Panc1 (cell line): ENCODE measurements at regions of chr5 and their contacts with region 1.

Region 1: GRCh38 chr5:169701910-169702451 is 64.9 kb downstream of the DOCK2 start:
- DNase-seq: no peak
- ATAC-seq: peak; percentile 79
- H3K4me3 ChIP-seq: no peak overlapping the region
- H3K27ac ChIP-seq: peak overlapping the region; percentile 52; the same call in 1 of the 2 replicates
- H3K4me1 ChIP-seq: peaks cover 13% of the 10 kb centered on the region
- H3K27me3 ChIP-seq: no peaks in the 10 kb centered on the region
- CTCF ChIP-seq: peak; percentile 73

Region 2: DNA sequence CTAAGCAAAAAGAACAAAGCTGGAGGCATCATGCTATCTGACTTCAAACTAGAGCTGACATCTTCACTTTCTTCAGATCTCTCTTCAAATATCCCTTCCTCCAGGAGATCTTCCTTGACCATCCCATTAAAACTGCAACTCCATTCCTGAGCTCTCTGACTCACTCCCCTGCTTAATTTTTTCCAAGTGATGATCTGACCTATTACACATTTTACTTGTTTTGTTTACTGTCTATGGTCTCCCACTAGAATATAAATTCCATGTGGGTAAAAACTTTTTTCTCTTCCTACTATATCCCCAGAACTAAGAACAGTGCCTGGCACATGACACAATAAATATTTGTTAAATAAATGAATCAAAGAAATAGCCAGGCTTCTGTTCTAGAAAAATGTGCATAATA is 488.5 kb before region 1 on chr5:
- CTCF ChIA-PET with region 1: no interaction called
- POLR2A ChIA-PET with region 1: no interaction called
- in situ Hi-C with region 1: no loop called
- intact Hi-C with region 1: no loop called
- DNase-seq: no peak
- ATAC-seq: no peak
- H3K4me3 ChIP-seq: no peak overlapping the region
- H3K27ac ChIP-seq: no peak overlapping the region
- H3K4me1 ChIP-seq: no peaks in the 10 kb centered on the region
- H3K27me3 ChIP-seq: no peaks in the 10 kb centered on the region
- CTCF ChIP-seq: no peak

Region 3: DNA sequence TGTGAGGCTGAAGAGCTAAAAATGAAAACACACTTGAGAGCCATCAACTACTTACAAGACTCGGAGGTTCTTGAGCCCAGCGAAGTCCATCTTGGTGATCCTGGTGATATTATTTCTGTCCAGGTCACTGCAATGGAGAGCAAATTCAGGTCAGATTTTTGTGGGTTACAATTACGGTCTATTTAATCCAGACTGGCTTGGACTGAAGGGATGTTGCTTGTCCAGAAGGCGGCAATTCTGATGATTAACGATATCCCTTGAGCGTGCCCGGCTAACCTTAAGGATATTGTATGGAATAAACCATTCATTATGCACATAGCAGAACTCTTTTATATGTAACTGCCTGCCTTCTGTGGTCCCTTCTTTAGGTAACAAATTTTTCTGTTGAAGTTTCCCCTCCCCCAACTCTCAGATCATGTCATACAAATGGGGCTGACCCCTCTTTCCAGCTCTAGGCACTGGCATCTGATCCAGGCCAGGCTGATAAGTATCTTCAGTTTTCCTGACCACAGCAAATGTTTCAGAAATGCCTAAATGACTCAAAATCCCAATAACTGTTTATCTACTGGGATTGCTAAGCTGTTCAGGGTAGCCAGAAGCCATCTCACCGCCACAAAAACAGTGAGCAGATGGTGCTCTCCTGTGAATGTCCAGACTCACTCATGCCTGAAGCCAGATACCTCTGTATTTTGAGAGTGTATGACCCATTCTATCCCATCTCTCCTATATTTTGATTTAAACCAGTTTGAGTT is 450.5 kb before region 1 on chr5:
- CTCF ChIA-PET with region 1: no interaction called
- POLR2A ChIA-PET with region 1: no interaction called
- in situ Hi-C with region 1: no loop called
- intact Hi-C with region 1: no loop called
- DNase-seq: no peak
- ATAC-seq: no peak
- H3K4me3 ChIP-seq: no peak overlapping the region
- H3K27ac ChIP-seq: no peak overlapping the region
- H3K4me1 ChIP-seq: no peaks in the 10 kb centered on the region
- H3K27me3 ChIP-seq: no peaks in the 10 kb centered on the region
- CTCF ChIP-seq: no peak

Region 4: DNA sequence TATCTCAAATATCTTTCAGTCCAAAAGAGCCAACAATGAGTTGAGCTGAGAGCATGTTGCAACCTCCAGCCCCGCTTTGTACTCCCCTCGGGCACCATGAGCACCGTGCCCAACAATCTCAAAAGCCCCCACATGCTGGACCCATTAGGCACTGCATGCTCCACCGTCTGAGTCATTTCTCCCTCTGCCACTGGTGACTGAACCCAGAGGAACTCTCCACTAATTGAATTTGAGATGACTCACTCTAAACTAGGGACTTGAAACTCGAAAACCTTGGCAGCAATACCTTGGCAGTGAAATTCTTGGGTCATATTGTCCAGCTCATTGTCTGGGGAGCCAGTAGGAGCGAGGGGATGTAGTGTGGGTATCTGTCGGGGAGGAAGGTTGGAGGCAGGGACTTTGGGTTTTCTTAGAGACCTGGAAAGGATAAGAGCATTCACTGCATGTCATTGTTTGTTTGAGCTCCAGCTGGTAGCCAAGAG is 351.2 kb before region 1 on chr5:
- CTCF ChIA-PET with region 1: no interaction called
- POLR2A ChIA-PET with region 1: no interaction called
- in situ Hi-C with region 1: no loop called
- intact Hi-C with region 1: no loop called
- DNase-seq: peak; percentile 86
- ATAC-seq: peak; percentile 94
- H3K4me3 ChIP-seq: no peak overlapping the region
- H3K27ac ChIP-seq: peak overlapping the region; percentile 93
- H3K4me1 ChIP-seq: peaks cover 38% of the 10 kb centered on the region
- H3K27me3 ChIP-seq: no peaks in the 10 kb centered on the region
- CTCF ChIP-seq: no peak

Region 5: DNA sequence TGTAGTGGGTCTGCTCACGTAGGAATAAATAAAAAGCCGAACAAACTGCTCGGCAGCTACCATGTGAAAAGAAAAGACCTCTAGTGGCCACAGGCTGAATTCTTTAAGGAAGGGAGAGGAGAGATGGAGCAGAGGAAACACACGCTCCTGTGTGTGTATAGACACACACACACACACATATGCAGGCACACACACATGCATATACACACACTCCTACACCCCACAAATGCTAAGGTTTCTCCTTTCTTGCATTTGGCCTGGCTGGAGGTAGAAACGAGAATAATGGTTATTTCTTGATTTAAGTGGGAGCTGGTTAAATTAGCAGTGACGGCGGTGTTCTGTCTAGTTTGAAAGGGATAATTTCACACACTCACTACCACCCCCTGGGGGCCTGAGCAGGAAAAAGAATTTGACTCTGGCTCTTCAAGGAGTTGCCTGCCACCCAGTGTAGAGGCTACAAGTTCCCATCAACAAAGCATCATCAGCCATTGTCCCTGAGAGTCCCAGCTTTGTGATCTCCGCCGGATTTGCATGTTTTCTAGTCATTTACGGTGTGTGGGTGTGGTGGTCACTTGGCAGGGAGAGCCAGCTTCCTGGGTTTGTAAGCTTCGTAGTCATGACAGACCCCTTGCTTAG is 278.6 kb after region 1 on chr5 and contains the start of gene INSYN2B:
- CTCF ChIA-PET with region 1: interaction called, 26 read pairs
- POLR2A ChIA-PET with region 1: no interaction called
- in situ Hi-C with region 1: no loop called
- intact Hi-C with region 1: loop called (anchors 1 kb)
- DNase-seq: peak; percentile 84
- ATAC-seq: peak; percentile 96
- H3K4me3 ChIP-seq: peak within 1 kb of the TSS; percentile 39 to 49
- H3K27ac ChIP-seq: peak within 1 kb of the TSS; percentile 67; the same call in 1 of the 2 replicates
- H3K4me1 ChIP-seq: peaks cover 12% of the 10 kb centered on the region
- H3K27me3 ChIP-seq: no peaks in the 10 kb centered on the region; the same call in 1 of the 2 replicates
- CTCF ChIP-seq: peak; percentile 90
- total RNA-seq, gene INSYN2B: 0.28 TPM

Region 6: GRCh38 chr5:170070556-170071412 is 368.8 kb after region 1 on chr5:
- CTCF ChIA-PET with region 1: interaction called, 3 read pairs
- POLR2A ChIA-PET with region 1: no interaction called
- in situ Hi-C with region 1: no loop called
- intact Hi-C with region 1: loop called (anchors 5 kb)
- DNase-seq: no peak
- ATAC-seq: peak; percentile 93
- H3K4me3 ChIP-seq: no peak overlapping the region
- H3K27ac ChIP-seq: no peak overlapping the region
- H3K4me1 ChIP-seq: no peaks in the 10 kb centered on the region
- H3K27me3 ChIP-seq: no peaks in the 10 kb centered on the region; the same call in 1 of the 2 replicates
- CTCF ChIP-seq: peak; percentile 95